Esophagus squamous epithelium (tissue), 5 donors: ENCODE measurements at regions of chr6 and their contacts with region 1.

Region 1: GRCh38 chr6:133916650-133917151 is 27.8 kb downstream of the TCF21 start:
- DNase-seq: peak; percentile 23
- H3K4me3 ChIP-seq: peak overlapping the region in 1 of 4 donors; percentile 26
- H3K27ac ChIP-seq: peak overlapping the region in 1 of 4 donors; percentile 39
- H3K4me1 ChIP-seq: peaks cover 0 to 19% (median 0%) of the 10 kb centered on the region in 3 donors
- H3K27me3 ChIP-seq: no peaks in the 10 kb centered on the region
- CTCF ChIP-seq: peak; percentile 58 to 86 (median 83)
- POLR2A ChIP-seq: no peak

Region 2: DNA sequence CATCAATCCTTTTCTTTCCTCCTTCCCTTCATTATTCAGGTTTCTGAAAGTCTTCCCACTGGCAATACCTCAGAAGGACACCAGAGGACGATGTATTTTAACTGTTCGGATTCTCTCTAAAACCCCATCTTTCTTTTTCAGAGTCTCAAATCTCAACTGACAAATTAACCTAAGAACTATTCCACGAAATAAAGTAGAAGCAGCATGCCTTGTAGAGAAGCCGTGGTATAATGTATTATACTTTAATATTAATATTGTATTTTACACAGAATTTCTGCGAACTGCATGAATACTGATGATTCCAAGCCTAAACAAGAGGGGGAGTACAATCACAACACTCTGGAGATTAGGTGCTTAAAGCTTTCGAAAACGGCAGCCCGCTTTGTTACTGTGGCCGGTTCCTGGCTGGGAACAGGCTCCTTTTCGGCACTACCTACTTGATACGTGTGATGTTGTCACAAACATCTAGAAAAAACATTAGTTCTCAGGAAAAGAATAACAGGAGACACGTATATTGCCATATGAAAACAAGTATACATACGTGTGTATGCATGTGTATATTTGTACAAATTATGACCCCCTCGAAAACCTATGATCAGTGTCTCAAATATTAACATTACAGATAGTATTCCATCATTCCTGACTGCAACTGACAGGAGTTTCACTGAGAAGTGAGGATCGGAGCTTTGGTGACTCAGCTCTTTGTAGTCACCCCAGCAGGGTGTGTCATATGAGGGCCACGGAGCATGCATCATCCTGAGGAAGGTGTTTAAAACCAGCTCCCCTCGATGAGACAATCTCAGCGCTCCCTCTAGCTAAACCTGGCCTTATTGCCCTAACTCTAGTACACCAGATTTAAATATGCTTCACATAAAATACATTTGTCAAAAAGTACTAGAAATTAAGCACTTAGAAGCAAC is 347.5 kb before region 1 on chr6:
- intact Hi-C with region 1: loop called (anchors 5 kb)
- DNase-seq: no peak
- H3K4me3 ChIP-seq: peak overlapping the region; percentile 17 to 61 (median 34)
- H3K27ac ChIP-seq: peak overlapping the region; percentile 38 to 64 (median 62)
- H3K4me1 ChIP-seq: peaks cover 0 to 15% (median 0%) of the 10 kb centered on the region in 3 donors
- H3K27me3 ChIP-seq: no peaks in the 10 kb centered on the region
- CTCF ChIP-seq: peak; percentile 36 to 95 (median 90)
- POLR2A ChIP-seq: no peak

Region 3: DNA sequence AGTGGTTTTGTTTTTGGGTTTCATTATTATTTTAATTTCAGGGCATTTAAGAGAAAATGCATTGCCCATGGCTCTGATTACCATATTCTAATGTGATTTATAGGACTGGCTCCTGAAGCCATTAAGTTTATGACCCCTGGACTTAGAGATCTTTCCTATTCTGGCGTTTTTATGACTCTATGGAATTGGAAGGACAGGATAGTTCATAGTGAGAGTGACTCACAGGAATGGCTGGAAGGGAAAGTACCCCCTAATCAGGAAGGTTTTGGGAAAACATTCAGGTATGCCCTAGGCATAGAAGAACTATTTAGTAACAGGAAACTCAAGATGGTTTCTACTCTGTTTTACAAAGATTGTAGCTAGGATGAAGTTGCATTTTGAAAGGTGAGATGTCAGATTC is 244.3 kb after region 1 on chr6:
- intact Hi-C with region 1: no loop called
- DNase-seq: no peak
- H3K4me3 ChIP-seq: no peak overlapping the region
- H3K27ac ChIP-seq: no peak overlapping the region
- H3K4me1 ChIP-seq: no peaks in the 10 kb centered on the region
- H3K27me3 ChIP-seq: no peaks in the 10 kb centered on the region
- CTCF ChIP-seq: no peak
- POLR2A ChIP-seq: no peak